ENCODE measurements at regions of chr1 and their contacts with region 1.

Region 1: GRCh38 chr1:235866913-235867845 is 473 bp upstream of the LYST start:
- DNase-seq: peak; percentile 98
- ATAC-seq: peak; percentile 76
- H3K4me3 Mint-ChIP-seq: peak overlapping the region; percentile 89
- H3K27ac Mint-ChIP-seq: peak overlapping the region; percentile 98
- H3K4me1 Mint-ChIP-seq: peaks cover 51% of the 10 kb centered on the region
- H3K27me3 Mint-ChIP-seq: no peaks in the 10 kb centered on the region

Region 2: DNA sequence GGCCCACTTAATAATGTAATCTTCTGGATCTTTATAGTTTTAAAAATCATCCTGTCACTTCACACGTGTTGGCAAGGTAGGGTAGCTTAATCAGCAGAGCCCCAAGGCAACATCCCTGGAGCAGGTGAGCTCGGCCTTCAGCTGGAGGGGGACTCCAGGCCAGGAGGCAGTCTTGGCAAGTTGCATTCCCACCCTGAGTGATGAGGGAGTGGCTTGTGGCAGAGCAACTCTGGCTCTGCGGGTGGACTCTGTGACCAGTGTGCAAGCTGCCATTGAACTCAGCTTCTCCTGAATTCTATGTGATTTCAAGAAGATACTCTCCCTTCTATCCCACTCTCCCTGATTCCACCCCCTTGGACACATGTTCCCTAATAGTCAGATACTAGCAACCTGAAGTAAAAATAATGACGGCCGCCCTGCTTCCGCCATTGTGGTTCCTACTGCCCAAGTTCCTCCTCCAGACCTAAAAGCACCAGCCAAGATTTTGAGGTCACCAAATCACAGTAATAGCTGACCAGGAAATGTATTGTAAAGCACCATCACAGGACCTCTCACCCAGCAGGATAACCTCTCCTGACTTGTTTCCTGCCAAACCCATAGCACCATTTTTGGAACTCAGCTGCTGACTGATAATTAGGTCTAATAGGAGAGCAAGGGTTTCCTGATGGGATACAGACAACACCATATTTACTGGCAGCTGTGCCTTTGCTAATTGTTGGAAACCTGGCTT is 11.1 kb after region 1 on chr1:
- CTCF ChIA-PET with region 1: interaction called, 24 read pairs
- DNase-seq: no peak
- ATAC-seq: no peak
- H3K4me3 Mint-ChIP-seq: no peak overlapping the region
- H3K27ac Mint-ChIP-seq: peak overlapping the region; percentile 91
- H3K4me1 Mint-ChIP-seq: peaks cover 86% of the 10 kb centered on the region
- H3K27me3 Mint-ChIP-seq: no peaks in the 10 kb centered on the region

Region 3: GRCh38 chr1:235888119-235888643 is 21.0 kb after region 1 on chr1:
- CTCF ChIA-PET with region 1: interaction called, 15 read pairs
- DNase-seq: peak; percentile 89
- ATAC-seq: peak; percentile 87
- H3K4me3 Mint-ChIP-seq: peak overlapping the region; percentile 72
- H3K27ac Mint-ChIP-seq: peak overlapping the region; percentile 98
- H3K4me1 Mint-ChIP-seq: peaks cover 75% of the 10 kb centered on the region
- H3K27me3 Mint-ChIP-seq: no peaks in the 10 kb centered on the region

Measured in activated CD8-positive, alpha-beta memory T cell treated with anti-CD3 and anti-CD28 coated beads, Interleukin-2, amount 10 ng/mL, durations not matched to agents 7 days and 5 days (primary cell).